ENCODE measurements at regions of chr6 and their contacts with region 1.

Region 1: GRCh38 chr6:163083141-163083540 is 331.4 kb upstream of the QKI start:
- DNase-seq: no peak
- ATAC-seq: no peak
- H3K4me3 ChIP-seq: no peak overlapping the region
- H3K27ac ChIP-seq: no peak overlapping the region
- H3K4me1 ChIP-seq: no peaks in the 10 kb centered on the region
- H3K27me3 ChIP-seq: no peaks in the 10 kb centered on the region; the same call in 1 of the 2 replicates
- CTCF ChIP-seq: no peak

Region 2: DNA sequence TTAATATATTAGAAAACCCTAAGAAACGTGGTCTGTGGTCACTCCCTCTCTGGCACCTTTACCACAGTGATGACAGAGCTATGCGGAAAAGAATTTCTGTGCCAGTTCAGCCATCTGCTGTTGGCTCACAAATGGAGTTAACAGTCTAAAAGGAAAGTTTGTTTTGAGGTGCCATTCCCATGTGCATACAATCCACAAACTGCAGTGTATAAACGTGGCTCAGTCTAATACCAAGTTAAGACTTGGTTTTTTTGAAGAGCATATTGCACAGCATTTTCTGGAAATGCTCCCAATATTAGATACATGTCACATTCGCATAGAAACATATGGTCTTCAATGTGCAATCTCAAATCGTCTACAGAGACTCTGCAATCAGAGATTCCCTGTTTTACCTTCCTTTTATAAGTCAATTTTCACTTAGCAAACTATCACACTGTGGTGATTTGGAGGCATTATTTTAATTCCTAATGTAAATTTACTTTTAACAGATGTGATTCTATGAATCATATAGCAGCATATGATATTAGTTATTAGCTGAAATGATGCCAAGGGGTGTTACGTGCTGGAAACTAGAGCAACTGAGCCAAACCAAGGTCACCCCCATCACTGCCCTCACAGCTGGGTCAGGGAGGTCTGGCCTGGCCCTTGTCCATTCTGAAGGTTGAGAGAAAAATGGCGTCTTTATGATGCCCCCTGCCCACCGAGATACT is 739.0 kb before region 1 on chr6:
- CTCF ChIA-PET with region 1: no interaction called
- POLR2A ChIA-PET with region 1: no interaction called
- in situ Hi-C with region 1: no loop called
- intact Hi-C with region 1: no loop called
- DNase-seq: no peak
- ATAC-seq: no peak
- H3K4me3 ChIP-seq: no peak overlapping the region
- H3K27ac ChIP-seq: no peak overlapping the region
- H3K4me1 ChIP-seq: no peaks in the 10 kb centered on the region
- H3K27me3 ChIP-seq: no peaks in the 10 kb centered on the region
- CTCF ChIP-seq: no peak

Region 3: GRCh38 chr6:163364641-163365040 is 281.5 kb after region 1 on chr6:
- CTCF ChIA-PET with region 1: no interaction called
- POLR2A ChIA-PET with region 1: interaction called, 12 read pairs
- in situ Hi-C with region 1: no loop called
- intact Hi-C with region 1: no loop called
- DNase-seq: no peak
- ATAC-seq: no peak
- H3K4me3 ChIP-seq: no peak overlapping the region
- H3K27ac ChIP-seq: no peak overlapping the region
- H3K4me1 ChIP-seq: no peaks in the 10 kb centered on the region; the same call in 1 of the 2 replicates
- H3K27me3 ChIP-seq: no peaks in the 10 kb centered on the region
- CTCF ChIP-seq: no peak

Measured in Panc1 (cell line).